ENCODE measurements at regions of chr16 and their contacts with region 1.

Region 1: GRCh38 chr16:70679666-70680494 is 6.0 kb downstream of the MTSS2 start:
- DNase-seq: no peak
- ATAC-seq: no peak
- H3K4me3 ChIP-seq: no peak overlapping the region
- H3K27ac ChIP-seq: no peak overlapping the region
- H3K4me1 ChIP-seq: peaks cover 25% of the 10 kb centered on the region
- H3K27me3 ChIP-seq: no peaks in the 10 kb centered on the region
- CTCF ChIP-seq: peak; percentile 75; the same call in 1 of the 2 replicates

Region 2: GRCh38 chr16:70703041-70703834 is 23.4 kb after region 1 on chr16:
- CTCF ChIA-PET with region 1: no interaction called
- POLR2A ChIA-PET with region 1: no interaction called
- in situ Hi-C with region 1: no loop called
- intact Hi-C with region 1: no loop called
- DNase-seq: no peak
- ATAC-seq: peak; percentile 58; the same call in 1 of the 2 replicates
- H3K4me3 ChIP-seq: no peak overlapping the region
- H3K27ac ChIP-seq: no peak overlapping the region
- H3K4me1 ChIP-seq: peaks cover 14% of the 10 kb centered on the region
- H3K27me3 ChIP-seq: no peaks in the 10 kb centered on the region
- CTCF ChIP-seq: no peak

Region 3: DNA sequence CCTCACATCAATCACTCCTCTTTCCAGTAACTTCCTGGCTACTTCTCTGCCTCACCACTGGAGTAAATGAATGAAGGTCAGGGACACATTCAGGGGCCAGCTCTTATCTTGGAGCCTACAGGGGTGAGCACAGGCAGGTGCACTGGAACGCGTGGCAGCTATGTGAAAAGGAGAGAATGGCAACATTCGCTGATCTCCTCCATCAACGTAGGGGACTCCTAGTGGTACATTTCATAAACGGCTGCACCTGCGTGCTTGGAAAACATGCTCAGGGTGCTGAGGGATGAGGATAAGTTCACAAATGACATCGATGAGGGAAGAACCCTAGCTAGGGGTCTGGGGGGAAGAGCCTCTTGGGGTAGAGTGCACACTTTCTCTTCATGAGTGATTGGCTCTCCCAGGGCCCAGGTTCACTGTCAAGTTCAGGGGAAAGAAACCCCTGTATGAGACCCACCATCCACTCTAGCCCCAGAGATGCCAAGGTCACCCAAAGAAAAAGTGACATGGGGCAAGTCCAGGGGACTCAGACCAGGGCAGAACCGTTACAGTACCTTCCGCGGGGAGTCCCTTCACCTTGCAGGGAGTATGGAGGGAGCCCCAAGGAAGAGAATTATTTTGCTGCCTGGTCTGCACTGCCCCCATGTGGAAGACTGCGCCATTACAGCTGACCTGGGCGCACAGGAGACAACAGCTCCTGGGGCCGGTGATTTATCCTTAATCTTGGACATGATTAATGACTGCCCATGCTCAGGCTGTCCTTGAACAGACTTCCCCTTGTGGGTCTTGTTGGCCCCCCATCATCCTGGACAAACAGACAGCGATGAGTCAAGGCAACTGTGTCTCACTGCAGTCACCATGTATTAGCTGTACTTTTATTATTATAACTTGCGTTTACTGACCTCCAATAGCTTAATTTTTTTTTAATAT is 91.0 kb after region 1 on chr16:
- CTCF ChIA-PET with region 1: interaction called, 8 read pairs
- POLR2A ChIA-PET with region 1: no interaction called
- in situ Hi-C with region 1: no loop called
- intact Hi-C with region 1: loop called (anchors 5 kb)
- DNase-seq: peak; percentile 41
- ATAC-seq: peak; percentile 87
- H3K4me3 ChIP-seq: no peak overlapping the region
- H3K27ac ChIP-seq: no peak overlapping the region
- H3K4me1 ChIP-seq: no peaks in the 10 kb centered on the region
- H3K27me3 ChIP-seq: no peaks in the 10 kb centered on the region
- CTCF ChIP-seq: peak; percentile 93

Measured in Panc1 (cell line).